ENCODE measurements at regions of chr12 and their contacts with region 1.

Region 1: GRCh38 chr12:57195611-57196371 is 20.8 kb upstream of the NXPH4 start:
- DNase-seq: no peak
- ATAC-seq: peak in 1 of 2 experiments; percentile 7; a peak in 3 of 6 replicates
- H3K4me3 ChIP-seq: no peak overlapping the region
- H3K27ac ChIP-seq: no peak overlapping the region
- H3K4me1 ChIP-seq: no peaks in the 10 kb centered on the region
- CTCF ChIP-seq: no peak
- EP300 ChIP-seq: no peak
- POLR2A ChIP-seq: no peak; the same call in 1 of the 2 replicates
- RAD21 ChIP-seq: no peak

Region 2: GRCh38 chr12:57213058-57213715 is 17.4 kb after region 1 on chr12:
- CTCF ChIA-PET with region 1: interaction called, 45 read pairs
- POLR2A ChIA-PET with region 1: interaction called, 5 read pairs
- DNase-seq: peak; percentile 89 to 94
- ATAC-seq: peak; percentile 51 to 75
- H3K4me3 ChIP-seq: no peak overlapping the region
- H3K27ac ChIP-seq: peak overlapping the region in 1 of 2 experiments; percentile 67; a peak in 4 of 6 replicates
- H3K4me1 ChIP-seq: peaks cover 31% of the 10 kb centered on the region
- CTCF ChIP-seq: peak; percentile 90
- EP300 ChIP-seq: no peak
- POLR2A ChIP-seq: no peak
- RAD21 ChIP-seq: peak; percentile 78 to 85